ENCODE measurements at regions of chr15 and their contacts with region 1.

Region 1: DNA sequence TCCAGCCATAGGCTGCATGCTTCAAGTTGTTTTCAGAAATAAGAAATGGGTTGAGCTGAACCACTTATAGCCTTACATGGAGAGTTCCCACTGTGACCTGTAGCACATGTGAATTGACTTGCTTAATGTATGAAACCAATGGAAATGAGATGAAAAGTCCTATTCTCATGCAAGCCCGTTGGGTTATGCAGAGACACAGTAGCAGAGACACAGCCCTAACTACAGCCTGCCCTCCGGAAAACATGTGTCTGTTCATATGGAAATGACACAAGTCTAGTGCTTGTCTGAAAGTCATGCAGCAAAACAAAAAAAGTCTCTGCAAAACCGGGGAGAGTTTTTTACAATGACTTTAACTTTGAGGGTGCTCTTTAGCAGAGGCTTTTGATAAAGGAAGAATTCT is 14.4 kb downstream of the HIGD2B start:
- DNase-seq: no peak
- ATAC-seq: no peak
- H3K4me3 Mint-ChIP-seq: no peak overlapping the region
- H3K27ac Mint-ChIP-seq: no peak overlapping the region
- H3K4me1 Mint-ChIP-seq: peaks cover 7% of the 10 kb centered on the region
- H3K27me3 Mint-ChIP-seq: peaks cover 14% of the 10 kb centered on the region

Region 2: GRCh38 chr15:72285927-72286516 is 385.5 kb before region 1 on chr15:
- CTCF ChIA-PET with region 1: no interaction called
- POLR2A ChIA-PET with region 1: no interaction called
- DNase-seq: peak; percentile 46
- ATAC-seq: peak; percentile 58
- H3K4me3 Mint-ChIP-seq: no peak overlapping the region
- H3K27ac Mint-ChIP-seq: no peak overlapping the region
- H3K4me1 Mint-ChIP-seq: no peaks in the 10 kb centered on the region
- H3K27me3 Mint-ChIP-seq: no peaks in the 10 kb centered on the region

Region 3: GRCh38 chr15:72599855-72600464 is 71.6 kb before region 1 on chr15:
- CTCF ChIA-PET with region 1: interaction called, 18 read pairs
- POLR2A ChIA-PET with region 1: no interaction called
- DNase-seq: peak; percentile 52
- ATAC-seq: peak; percentile 49
- H3K4me3 Mint-ChIP-seq: no peak overlapping the region
- H3K27ac Mint-ChIP-seq: no peak overlapping the region
- H3K4me1 Mint-ChIP-seq: no peaks in the 10 kb centered on the region
- H3K27me3 Mint-ChIP-seq: peaks cover 7% of the 10 kb centered on the region

Region 4: DNA sequence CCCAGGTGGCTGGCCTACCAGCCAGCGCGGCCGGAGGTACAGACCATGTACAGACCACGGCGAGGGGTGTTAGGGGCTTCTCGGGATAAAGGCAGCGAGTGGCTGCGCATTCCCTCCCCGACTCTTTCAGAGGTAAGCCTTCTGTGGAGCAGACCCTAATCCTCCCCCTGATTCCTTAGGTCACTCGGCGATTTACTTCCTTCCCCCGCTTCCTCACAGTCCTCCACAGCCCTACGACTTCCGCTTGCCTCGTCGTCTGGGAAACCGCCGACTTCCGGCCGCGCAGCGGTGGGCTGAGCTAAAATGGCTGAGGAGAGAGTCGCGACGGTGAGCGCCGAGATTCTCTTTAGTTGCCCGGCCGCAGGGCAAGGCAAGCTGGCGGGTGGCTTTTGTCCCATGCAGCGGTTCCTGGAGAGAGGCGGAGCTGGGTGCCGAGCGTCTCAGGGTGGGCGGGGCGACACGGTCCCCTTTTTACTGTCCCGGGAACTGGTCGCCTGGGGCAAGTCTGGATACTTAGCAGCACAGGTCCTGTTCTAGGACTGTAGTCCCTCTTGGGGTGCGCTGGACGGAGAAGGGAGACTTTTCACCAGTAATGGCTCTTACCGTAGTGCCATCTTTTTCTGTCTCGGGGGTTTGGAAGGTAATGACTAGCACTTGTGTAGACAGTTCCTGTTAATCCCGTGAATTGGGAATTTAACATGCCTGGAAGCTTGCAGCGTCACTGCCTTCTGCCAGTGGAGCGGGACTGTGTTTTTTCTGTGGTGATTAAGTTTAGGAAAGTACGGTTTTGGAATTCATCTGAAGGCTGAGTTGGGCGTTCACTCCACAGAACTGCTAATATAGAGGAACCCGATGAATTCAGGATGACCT is 14.6 kb after region 1 on chr15 and contains the starts of genes BBS4 and HIGD2B:
- CTCF ChIA-PET with region 1: interaction called, 10 read pairs
- POLR2A ChIA-PET with region 1: interaction called, 3 read pairs
- DNase-seq: peak; percentile 93
- ATAC-seq: peak; percentile 95
- H3K4me3 Mint-ChIP-seq: peak within 1 kb of the TSS; percentile 90
- H3K27ac Mint-ChIP-seq: peak within 1 kb of the TSS; percentile 92
- H3K4me1 Mint-ChIP-seq: peaks cover 16% of the 10 kb centered on the region
- H3K27me3 Mint-ChIP-seq: peaks cover under 1% of the 10 kb centered on the region
- total RNA-seq, gene BBS4: 9.2 to 11.6 TPM
- total RNA-seq, gene HIGD2B: 0.24 TPM in 1 of 2 experiments, not detected in the other

Measured in activated CD8-positive, alpha-beta T cell treated with anti-CD3 and anti-CD28 coated beads, Interleukin-2, amount 10 ng/mL, durations not matched to agents 7 days and 5 days (primary cell).